ENCODE measurements at regions of chr21 and their contacts with region 1.

Region 1: DNA sequence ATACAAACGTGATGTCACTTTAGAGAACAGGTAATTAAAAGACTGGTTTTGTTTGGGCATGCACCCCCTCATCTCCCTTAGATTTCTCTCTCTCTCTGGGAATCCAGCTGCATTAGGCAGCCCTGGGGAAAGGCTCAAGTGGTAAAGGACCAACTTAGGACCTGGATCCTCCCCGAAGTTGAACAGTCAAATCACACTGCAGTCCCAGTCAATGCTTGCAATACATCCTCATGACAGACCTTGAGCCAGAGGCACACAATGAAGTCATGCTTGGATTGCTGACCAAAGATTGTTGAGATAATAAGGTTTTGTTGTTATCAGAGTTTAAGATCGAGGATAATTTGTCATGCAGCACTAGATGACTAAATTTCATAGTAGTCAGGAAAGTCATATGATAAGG is 1285.8 kb upstream of the NCAM2 start:
- DNase-seq: no peak
- H3K4me3 ChIP-seq: no peak overlapping the region
- H3K27ac ChIP-seq: no peak overlapping the region
- H3K4me1 ChIP-seq: no peaks in the 10 kb centered on the region
- H3K27me3 ChIP-seq: no peaks in the 10 kb centered on the region
- CTCF ChIP-seq: no peak

Region 2: DNA sequence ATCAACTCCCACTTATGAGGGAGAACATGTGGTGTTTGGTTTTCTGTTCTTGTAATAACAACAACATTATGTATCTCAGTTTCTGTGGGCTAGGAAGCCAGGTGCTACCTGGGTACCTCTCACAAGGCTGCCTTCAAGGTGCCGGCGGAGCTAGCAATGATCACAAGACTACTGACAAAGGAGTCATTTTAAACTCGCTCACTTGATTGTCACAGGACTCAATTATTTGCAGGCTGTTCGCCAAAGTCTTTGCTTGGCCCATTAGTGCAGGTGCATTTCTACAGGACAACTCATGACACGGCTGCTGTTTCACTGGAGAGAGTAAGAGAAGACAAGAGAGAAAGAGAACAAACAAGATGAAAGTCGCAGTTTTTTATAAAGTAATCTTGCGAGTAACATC is 71.5 kb before region 1 on chr21:
- intact Hi-C with region 1: no loop called
- DNase-seq: no peak
- H3K4me3 ChIP-seq: no peak overlapping the region
- H3K27ac ChIP-seq: no peak overlapping the region
- H3K4me1 ChIP-seq: no peaks in the 10 kb centered on the region
- H3K27me3 ChIP-seq: no peaks in the 10 kb centered on the region
- CTCF ChIP-seq: no peak

Region 3: DNA sequence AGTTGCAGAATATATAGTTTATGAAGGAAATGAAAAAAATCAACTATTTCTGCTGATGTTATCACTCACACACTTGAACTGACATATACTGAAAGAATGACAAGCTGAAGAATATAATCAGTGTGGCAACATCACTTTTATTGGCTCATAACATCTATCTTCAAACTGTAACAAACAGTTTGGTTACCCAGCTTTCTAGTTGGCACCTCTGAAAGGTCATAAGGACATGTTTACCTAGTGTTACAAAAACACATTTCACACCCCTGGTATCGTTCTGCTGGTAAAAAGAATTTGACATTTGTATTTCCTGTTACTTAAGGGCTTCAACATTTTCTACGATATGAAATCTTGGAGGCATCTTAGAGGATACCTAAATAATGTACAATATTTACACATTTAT is 18.8 kb after region 1 on chr21:
- intact Hi-C with region 1: loop called (anchors 2 kb)
- DNase-seq: no peak
- H3K4me3 ChIP-seq: no peak overlapping the region
- H3K27ac ChIP-seq: no peak overlapping the region
- H3K4me1 ChIP-seq: no peaks in the 10 kb centered on the region
- H3K27me3 ChIP-seq: no peaks in the 10 kb centered on the region
- CTCF ChIP-seq: no peak

Region 4: DNA sequence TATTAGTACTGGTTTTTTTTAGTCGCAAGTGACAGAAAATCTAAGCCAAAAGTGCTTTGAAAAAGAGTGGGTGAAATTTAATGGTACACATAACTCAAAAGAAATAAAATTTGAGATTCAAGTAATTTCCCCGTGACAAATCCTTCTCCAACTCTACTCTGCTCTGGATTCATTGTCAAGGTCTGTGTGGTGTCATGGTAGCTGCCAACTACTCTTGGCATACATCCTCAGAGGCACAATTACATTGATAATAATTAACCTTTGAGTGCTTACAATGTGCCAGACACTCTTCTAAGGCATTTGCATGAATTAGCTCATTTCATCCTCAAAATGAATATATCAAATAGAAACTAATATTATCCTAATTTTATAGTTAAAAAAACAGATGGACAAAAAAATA is 131.9 kb after region 1 on chr21:
- intact Hi-C with region 1: no loop called
- DNase-seq: no peak
- H3K4me3 ChIP-seq: no peak overlapping the region
- H3K27ac ChIP-seq: no peak overlapping the region
- H3K4me1 ChIP-seq: no peaks in the 10 kb centered on the region
- H3K27me3 ChIP-seq: no peaks in the 10 kb centered on the region
- CTCF ChIP-seq: no peak

Measured in tibial artery (tissue), 4 donors.